Activated CD8-positive, alpha-beta memory T cell treated with anti-CD3 and anti-CD28 coated beads, Interleukin-2, amount 10 ng/mL, durations not matched to agents 7 days and 5 days (primary cell): ENCODE measurements at regions of chr9 and their contacts with region 1.

Region 1: DNA sequence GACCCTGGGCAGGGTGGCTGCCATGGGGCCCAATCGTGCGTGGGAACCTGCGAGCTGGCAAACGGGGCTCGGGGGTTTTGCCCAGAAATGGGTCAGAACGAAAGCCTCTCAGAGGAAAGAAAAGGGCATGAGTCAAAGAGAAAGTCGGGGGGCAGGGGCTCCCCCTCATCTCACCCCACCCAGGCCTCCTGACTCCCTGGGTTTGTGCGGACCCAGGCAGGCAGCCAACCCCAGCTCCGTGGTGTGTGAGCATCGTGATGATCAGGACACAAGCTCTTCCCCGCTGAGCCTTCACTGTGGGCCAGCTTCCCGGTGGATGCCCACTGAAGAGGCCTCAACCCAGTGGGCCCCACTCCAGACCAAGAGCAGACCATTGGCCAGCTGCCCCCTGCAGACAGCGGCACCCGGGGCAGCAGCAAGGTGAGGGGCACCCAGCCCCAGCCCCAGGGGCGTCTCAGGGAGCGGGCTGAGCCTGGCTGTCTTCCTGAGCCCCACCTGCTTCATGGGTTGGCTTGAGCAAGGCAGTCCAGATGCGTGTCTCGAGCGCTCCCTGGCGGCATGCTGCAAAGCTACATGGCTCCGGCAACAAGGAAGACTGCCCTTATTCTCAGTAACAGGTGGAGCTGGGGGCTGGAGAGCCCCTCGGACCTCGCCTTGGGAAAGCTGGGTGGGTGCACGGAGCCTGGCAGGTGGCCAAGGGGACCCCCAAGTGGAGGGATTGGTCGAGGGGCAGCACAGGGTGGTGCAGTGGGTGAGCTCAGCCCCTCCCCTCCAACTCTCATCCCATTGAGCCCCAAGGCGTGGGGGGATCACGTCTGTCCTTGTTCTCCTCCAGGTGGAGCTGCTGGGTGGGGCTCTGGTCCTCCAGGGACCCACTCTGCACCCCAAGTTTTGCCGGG is 3.2 kb upstream of the FUT7 start:
- DNase-seq: peak; percentile 95
- ATAC-seq: peak; percentile 89
- H3K4me3 Mint-ChIP-seq: peak overlapping the region; percentile 62
- H3K27ac Mint-ChIP-seq: peak overlapping the region; percentile 93
- H3K4me1 Mint-ChIP-seq: peaks cover 38% of the 10 kb centered on the region
- H3K27me3 Mint-ChIP-seq: no peaks in the 10 kb centered on the region

Region 2: DNA sequence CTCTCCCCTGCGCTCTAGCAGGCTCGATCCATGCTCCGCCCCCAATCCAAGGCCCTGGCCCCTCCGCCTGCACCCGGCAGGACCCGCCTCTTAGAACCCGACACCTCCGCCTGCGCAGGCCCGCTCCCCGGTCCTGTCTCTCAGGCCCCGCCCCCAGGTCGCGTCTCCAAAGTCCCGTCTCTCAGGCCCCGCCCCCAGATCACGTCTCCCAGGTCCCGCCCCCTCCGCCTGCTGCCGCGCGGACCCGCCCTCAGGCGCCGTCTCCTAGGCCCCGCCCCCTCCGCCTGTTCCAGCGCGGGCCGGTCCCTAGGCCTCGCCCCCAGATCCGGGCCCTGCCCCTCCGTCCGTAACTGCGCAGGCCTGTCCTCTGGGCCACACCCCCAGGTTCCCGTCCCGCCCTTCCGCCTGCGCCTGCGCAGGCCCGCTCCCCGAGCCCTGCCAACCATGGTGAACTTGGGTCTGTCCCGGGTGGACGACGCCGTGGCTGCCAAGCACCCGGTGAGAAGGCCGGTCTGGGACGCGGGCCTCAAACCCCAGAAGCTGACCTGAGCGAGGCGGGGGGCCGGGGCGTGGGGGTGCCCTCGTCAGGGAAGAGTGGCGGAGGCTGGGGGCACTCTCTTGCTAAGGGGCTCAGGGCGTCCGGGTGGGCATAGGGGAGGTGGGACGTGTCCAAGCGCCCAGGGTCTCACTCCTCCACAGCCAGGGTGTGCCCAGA is 244.0 kb before region 1 on chr9 and contains the start of gene TMEM141:
- CTCF ChIA-PET with region 1: interaction called, 32 read pairs
- DNase-seq: peak; percentile 100
- ATAC-seq: peak; percentile 93
- H3K4me3 Mint-ChIP-seq: peak within 1 kb of the TSS; percentile 77
- H3K27ac Mint-ChIP-seq: peak within 1 kb of the TSS; percentile 86
- H3K4me1 Mint-ChIP-seq: peaks cover 30% of the 10 kb centered on the region
- H3K27me3 Mint-ChIP-seq: peaks cover 9% of the 10 kb centered on the region
- total RNA-seq, gene TMEM141: 31.7 to 32.8 TPM

Region 3: DNA sequence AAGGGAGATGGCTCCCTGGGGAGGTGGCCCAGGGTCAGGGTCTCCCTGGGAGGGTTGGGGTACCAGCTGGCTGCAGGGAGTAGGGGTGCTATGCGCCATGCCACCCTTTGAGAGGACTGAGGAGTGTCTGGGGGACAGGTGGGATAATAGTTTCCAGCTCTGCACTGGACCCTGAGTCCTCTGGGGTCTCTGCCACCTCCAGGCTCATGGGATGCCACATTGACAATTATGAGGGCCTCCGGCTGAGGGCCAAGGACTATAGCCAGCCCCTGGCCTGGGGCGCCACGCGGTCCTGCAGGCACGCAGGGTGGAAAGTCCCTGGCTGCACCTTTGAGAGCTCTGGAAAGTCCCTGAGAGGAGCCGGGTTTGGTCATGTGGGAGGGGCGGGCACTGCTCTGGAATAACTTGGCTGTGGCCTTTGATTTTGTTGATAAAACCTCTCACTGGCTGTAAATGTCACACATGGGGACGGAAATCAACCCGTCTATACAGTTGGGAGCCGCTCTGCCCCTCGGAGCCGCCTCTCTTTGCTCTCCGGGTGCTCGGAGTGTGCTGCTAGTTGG is 132.8 kb before region 1 on chr9:
- CTCF ChIA-PET with region 1: interaction called, 14 read pairs
- DNase-seq: peak; percentile 88
- ATAC-seq: peak; percentile 83
- H3K4me3 Mint-ChIP-seq: peak overlapping the region; percentile 59
- H3K27ac Mint-ChIP-seq: peak overlapping the region; percentile 90
- H3K4me1 Mint-ChIP-seq: peaks cover 43% of the 10 kb centered on the region
- H3K27me3 Mint-ChIP-seq: no peaks in the 10 kb centered on the region

Region 4: GRCh38 chr9:136978073-136978864 is 56.8 kb before region 1 on chr9:
- CTCF ChIA-PET with region 1: interaction called, 25 read pairs
- DNase-seq: peak; percentile 83
- ATAC-seq: peak; percentile 63
- H3K4me3 Mint-ChIP-seq: no peak overlapping the region
- H3K27ac Mint-ChIP-seq: no peak overlapping the region
- H3K4me1 Mint-ChIP-seq: peaks cover 15% of the 10 kb centered on the region
- H3K27me3 Mint-ChIP-seq: peaks cover 5% of the 10 kb centered on the region

Region 5: DNA sequence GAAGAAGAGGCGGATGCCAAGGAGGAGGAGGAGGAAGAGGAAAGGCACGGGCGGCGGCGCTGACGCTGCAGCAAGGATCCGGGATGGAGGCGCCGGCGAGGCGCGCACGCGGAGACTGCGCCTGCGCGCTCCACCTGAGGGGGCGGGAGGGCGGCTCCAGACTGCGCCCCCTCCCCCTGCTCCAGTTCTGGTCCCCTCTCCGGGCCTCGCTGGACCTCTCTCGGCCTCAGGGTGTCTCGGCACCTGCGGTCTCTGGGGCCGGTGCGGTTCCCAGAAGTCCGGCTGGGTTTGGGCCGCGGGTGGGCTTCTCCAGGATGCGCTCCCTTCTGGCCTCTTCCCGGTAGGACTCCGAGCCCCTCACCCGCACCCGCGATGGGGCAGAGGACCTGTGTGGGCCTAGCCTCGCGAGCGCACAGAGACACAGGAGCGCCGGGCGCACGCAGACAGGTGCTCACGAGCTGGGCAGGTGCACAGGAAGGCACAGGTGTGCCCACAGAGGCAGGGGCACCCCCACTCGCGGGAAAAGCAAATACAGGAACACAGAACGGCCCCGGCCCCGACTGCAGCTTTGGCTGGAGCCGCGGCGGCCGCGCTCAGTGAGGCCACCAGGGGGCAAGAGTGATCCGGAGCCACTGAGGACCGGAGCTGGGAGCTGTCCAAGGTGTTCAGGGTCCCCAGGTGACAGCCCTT is 11.1 kb after region 1 on chr9 and contains the start of gene NPDC1:
- CTCF ChIA-PET with region 1: interaction called, 48 read pairs
- DNase-seq: peak; percentile 89
- ATAC-seq: peak; percentile 82
- H3K4me3 Mint-ChIP-seq: peak within 1 kb of the TSS; percentile 71
- H3K27ac Mint-ChIP-seq: no peak within 1 kb of the TSS
- H3K4me1 Mint-ChIP-seq: peaks cover 16% of the 10 kb centered on the region
- H3K27me3 Mint-ChIP-seq: peaks cover 43% of the 10 kb centered on the region
- total RNA-seq, gene NPDC1: 30.4 to 55.6 TPM

Region 6: DNA sequence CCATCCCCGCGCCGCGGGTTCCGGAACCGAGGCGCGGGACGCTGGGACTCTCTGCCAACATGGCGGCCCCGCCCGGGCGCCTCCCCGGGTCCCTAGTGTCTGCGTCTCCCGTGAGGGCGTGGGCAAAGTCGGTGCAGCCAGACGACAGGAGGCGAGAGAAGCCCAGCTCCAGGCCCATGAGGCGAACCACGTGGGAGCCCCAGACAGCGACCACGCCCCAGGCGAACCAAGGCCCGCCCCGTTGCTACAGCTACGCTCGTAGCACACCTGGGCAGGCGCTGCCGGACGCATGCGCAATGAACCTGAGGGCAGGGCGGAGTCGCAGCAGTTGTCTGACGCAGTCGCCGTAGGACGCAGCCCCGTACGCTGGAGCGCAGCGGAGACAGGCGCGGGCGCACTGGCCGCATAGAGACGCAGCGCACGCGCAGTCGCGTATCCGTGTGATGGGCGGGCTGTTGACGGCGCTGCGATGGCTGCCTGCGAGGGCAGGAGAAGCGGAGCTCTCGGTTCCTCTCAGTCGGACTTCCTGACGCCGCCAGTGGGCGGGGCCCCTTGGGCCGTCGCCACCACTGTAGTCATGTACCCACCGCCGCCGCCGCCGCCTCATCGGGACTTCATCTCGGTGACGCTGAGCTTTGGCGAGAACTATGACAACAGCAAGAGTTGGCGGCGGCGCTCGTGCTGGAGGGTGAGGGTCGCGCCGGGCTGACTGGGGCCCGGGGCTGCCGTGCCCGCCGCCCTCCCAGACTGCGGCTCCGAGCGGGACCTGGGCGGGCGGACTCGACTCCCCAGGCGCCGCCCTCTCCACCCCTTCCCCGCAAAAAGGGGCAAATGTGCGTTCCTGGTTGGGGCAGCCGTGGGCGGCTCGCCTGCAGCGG is 51.7 kb after region 1 on chr9 and contains the start of gene MAN1B1:
- CTCF ChIA-PET with region 1: interaction called, 12 read pairs
- DNase-seq: peak; percentile 100
- ATAC-seq: peak; percentile 86
- H3K4me3 Mint-ChIP-seq: peak within 1 kb of the TSS; percentile 82
- H3K27ac Mint-ChIP-seq: peak within 1 kb of the TSS; percentile 90
- H3K4me1 Mint-ChIP-seq: peaks cover 41% of the 10 kb centered on the region
- H3K27me3 Mint-ChIP-seq: no peaks in the 10 kb centered on the region
- total RNA-seq, gene MAN1B1: 43.8 to 60.6 TPM